Naive thymus-derived CD4-positive, alpha-beta T cell (primary cell): ENCODE measurements at regions of chr2 and their contacts with region 1.

Region 1: DNA sequence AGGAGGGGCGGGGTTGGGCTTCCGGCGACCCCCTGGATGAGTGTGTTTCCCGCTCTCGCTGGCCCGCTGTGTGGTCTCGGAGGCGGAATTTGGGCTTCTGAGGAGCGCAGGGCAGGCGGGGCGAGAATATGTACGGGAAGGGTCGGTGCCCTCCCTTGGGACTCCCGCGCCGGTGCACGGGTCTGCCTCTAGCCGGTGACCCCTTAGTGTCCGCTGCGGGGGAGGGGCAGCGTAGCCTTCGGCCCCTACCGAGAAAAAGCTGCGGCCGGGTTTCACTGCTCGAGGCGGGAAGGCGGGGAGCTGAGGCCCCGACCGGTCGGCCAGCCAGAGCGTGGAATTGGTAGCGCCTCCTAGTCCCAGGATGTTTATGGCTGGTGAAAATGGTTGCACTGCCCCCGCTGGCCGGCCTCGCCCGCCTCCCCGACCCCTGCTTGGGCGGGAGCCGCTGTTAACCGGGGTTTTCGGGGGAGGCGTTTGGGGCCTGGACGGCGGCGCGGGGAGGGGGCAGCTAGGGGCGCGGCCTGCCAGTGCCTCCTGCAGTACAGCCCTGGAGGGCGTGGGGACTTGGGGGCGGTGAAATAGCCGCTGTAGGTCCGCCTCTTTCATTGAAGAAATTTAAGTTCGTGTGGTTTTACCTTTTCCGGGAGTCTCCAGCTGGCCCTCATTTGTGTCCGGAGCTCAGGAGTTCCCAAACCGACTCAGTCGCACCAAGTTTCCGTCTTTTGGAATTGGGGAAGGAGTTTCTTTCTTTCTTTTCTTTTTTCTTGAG is at the start of gene UGP2:
- DNase-seq: peak; percentile 68 to 89 (median 83)
- ATAC-seq: peak; percentile 77
- H3K4me3 ChIP-seq: peak within 1 kb of the TSS; percentile 82
- H3K4me3 Mint-ChIP-seq: peak within 1 kb of the TSS; percentile 97 to 100 (median 99)
- H3K27ac ChIP-seq: peak within 1 kb of the TSS; percentile 90
- H3K27ac Mint-ChIP-seq: peak within 1 kb of the TSS; percentile 95 to 99 (median 97)
- H3K4me1 ChIP-seq: peaks cover 5 to 24% of the 10 kb centered on the region in 2 donors
- H3K4me1 Mint-ChIP-seq: peaks cover 27 to 60% (median 53%) of the 10 kb centered on the region in 7 donors
- H3K27me3 ChIP-seq: no peaks in the 10 kb centered on the region
- H3K27me3 Mint-ChIP-seq: peaks cover 0 to 14% (median 0%) of the 10 kb centered on the region in 5 donors
- total RNA-seq, gene UGP2: 69.5 to 134 (median 92.4) TPM

Region 2: GRCh38 chr2:63692002-63692606 is 149.3 kb before region 1 on chr2:
- CTCF ChIA-PET with region 1: interaction called, 3 read pairs
- POLR2A ChIA-PET with region 1: no interaction called
- intact Hi-C with region 1: loop called in 1 of 2 experiments (anchors 1 kb)
- DNase-seq: peak in 7 of 9 donors; percentile 18 to 61 (median 51)
- ATAC-seq: peak; percentile 74
- H3K4me3 ChIP-seq: no peak overlapping the region
- H3K4me3 Mint-ChIP-seq: no peak overlapping the region
- H3K27ac ChIP-seq: no peak overlapping the region
- H3K27ac Mint-ChIP-seq: no peak overlapping the region
- H3K4me1 ChIP-seq: no peaks in the 10 kb centered on the region
- H3K4me1 Mint-ChIP-seq: peaks cover 0 to 4% (median 0%) of the 10 kb centered on the region in 7 donors
- H3K27me3 ChIP-seq: no peaks in the 10 kb centered on the region
- H3K27me3 Mint-ChIP-seq: peaks cover 0 to 11% (median 0%) of the 10 kb centered on the region in 5 donors

Region 3: GRCh38 chr2:63861220-63861822 is 19.9 kb after region 1 on chr2:
- CTCF ChIA-PET with region 1: interaction called, 7 read pairs
- POLR2A ChIA-PET with region 1: interaction called, 120 read pairs
- intact Hi-C with region 1: loop called (anchors 1 kb)
- DNase-seq: peak in 8 of 9 donors; percentile 23 to 79 (median 70)
- ATAC-seq: peak; percentile 81
- H3K4me3 ChIP-seq: no peak overlapping the region
- H3K4me3 Mint-ChIP-seq: no peak overlapping the region
- H3K27ac ChIP-seq: no peak overlapping the region
- H3K27ac Mint-ChIP-seq: peak overlapping the region in 5 of 9 donors; percentile 3 to 41 (median 18)
- H3K4me1 ChIP-seq: peaks cover 6 to 14% of the 10 kb centered on the region in 2 donors
- H3K4me1 Mint-ChIP-seq: peaks cover 14 to 54% (median 47%) of the 10 kb centered on the region in 7 donors
- H3K27me3 ChIP-seq: no peaks in the 10 kb centered on the region
- H3K27me3 Mint-ChIP-seq: no peaks in the 10 kb centered on the region

Region 4: DNA sequence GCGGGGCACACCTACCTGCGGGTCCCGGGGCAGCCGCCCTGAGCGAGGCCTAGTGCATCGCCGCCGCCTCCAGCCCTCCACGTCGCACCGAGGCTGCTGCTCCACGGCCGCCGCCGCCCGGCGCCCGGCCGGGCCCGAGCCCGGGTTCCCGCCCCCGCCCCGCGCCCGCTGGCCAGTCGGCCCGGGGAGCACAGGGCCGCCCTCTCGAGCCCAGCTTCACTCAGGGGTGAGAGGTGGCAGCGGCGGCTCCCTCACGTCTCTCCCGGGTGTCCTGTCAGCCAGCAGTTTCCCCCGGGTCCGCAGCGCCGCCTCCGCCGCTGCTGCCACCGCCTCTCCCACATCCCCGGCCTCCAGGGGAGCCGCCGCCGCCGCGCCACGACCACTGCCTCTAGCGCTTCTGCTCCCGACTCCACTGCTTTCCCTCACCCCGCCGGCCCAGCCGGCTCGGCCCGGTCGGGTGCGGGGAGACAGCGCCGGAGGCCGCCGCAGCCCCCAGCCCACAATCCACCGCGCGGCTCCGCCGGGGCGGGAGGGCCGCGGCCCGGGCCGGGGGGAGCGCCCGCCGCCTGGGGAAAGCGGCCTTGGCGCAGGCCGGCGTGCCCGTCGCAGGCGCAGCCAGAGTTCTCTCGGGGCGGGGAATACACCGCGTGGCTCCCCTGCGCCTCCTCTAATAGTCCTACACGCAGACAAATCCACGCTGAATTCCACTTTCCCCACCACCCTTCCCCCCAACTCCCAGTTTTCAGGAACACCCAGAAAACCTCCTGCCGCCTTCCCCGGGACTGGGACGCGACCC is 177.7 kb after region 1 on chr2 and contains the start of gene VPS54:
- CTCF ChIA-PET with region 1: no interaction called
- POLR2A ChIA-PET with region 1: interaction called, 3 read pairs
- intact Hi-C with region 1: loop called (anchors 5 kb)
- DNase-seq: peak; percentile 42 to 76 (median 65)
- ATAC-seq: peak; percentile 87
- H3K4me3 ChIP-seq: peak within 1 kb of the TSS; percentile 86
- H3K4me3 Mint-ChIP-seq: peak within 1 kb of the TSS; percentile 94 to 100 (median 98)
- H3K27ac ChIP-seq: peak within 1 kb of the TSS; percentile 79
- H3K27ac Mint-ChIP-seq: peak within 1 kb of the TSS; percentile 95 to 100 (median 97)
- H3K4me1 ChIP-seq: peaks cover 22 to 31% of the 10 kb centered on the region in 2 donors
- H3K4me1 Mint-ChIP-seq: peaks cover 20 to 60% (median 48%) of the 10 kb centered on the region in 7 donors
- H3K27me3 ChIP-seq: no peaks in the 10 kb centered on the region
- H3K27me3 Mint-ChIP-seq: no peaks in the 10 kb centered on the region
- total RNA-seq, gene VPS54: 13.2 to 20.8 (median 15.6) TPM

Region 5: GRCh38 chr2:65056215-65057053 is 1215.0 kb after region 1 on chr2 and contains the start of gene CEP68:
- CTCF ChIA-PET with region 1: no interaction called
- POLR2A ChIA-PET with region 1: no interaction called
- intact Hi-C with region 1: loop called in 1 of 2 experiments (anchors 5 kb)
- DNase-seq: peak; percentile 88 to 96 (median 95)
- ATAC-seq: peak; percentile 96
- H3K4me3 ChIP-seq: peak within 1 kb of the TSS; percentile 54
- H3K4me3 Mint-ChIP-seq: peak within 1 kb of the TSS; percentile 79 to 99 (median 94)
- H3K27ac ChIP-seq: peak within 1 kb of the TSS; percentile 76
- H3K27ac Mint-ChIP-seq: peak within 1 kb of the TSS; percentile 84 to 97 (median 90)
- H3K4me1 ChIP-seq: peaks cover 10 to 42% of the 10 kb centered on the region in 2 donors
- H3K4me1 Mint-ChIP-seq: peaks cover 41 to 81% (median 61%) of the 10 kb centered on the region in 7 donors
- H3K27me3 ChIP-seq: no peaks in the 10 kb centered on the region
- H3K27me3 Mint-ChIP-seq: peaks cover 0 to 2% (median 0%) of the 10 kb centered on the region in 5 donors
- total RNA-seq, gene CEP68: 8.5 to 52.0 (median 20.8) TPM

Region 6: GRCh38 chr2:65227425-65228262 is 1386.2 kb after region 1 on chr2 and contains the start of gene ACTR2:
- CTCF ChIA-PET with region 1: no interaction called
- POLR2A ChIA-PET with region 1: no interaction called
- intact Hi-C with region 1: loop called (anchors 1 to 5 kb)
- DNase-seq: peak; percentile 86 to 94 (median 93)
- ATAC-seq: peak; percentile 97
- H3K4me3 ChIP-seq: peak within 1 kb of the TSS; percentile 99
- H3K4me3 Mint-ChIP-seq: peak within 1 kb of the TSS; percentile 95 to 100 (median 98)
- H3K27ac ChIP-seq: peak within 1 kb of the TSS; percentile 97
- H3K27ac Mint-ChIP-seq: peak within 1 kb of the TSS; percentile 97 to 99 (median 98)
- H3K4me1 ChIP-seq: peaks cover 25 to 38% of the 10 kb centered on the region in 2 donors
- H3K4me1 Mint-ChIP-seq: peaks cover 24 to 54% (median 44%) of the 10 kb centered on the region in 7 donors
- H3K27me3 ChIP-seq: no peaks in the 10 kb centered on the region
- H3K27me3 Mint-ChIP-seq: no peaks in the 10 kb centered on the region
- total RNA-seq, gene ACTR2: 180 to 435 (median 287) TPM